ENCODE measurements at regions of chr18 and their contacts with region 1.

Region 1: GRCh38 chr18:54392543-54393023 is 34.9 kb downstream of the C18orf54 start:
- DNase-seq: no peak
- ATAC-seq: peak in 3 of 4 donors; percentile 45 to 51 (median 48)
- H3K4me3 ChIP-seq: no peak overlapping the region
- H3K27ac ChIP-seq: no peak overlapping the region
- H3K4me1 ChIP-seq: peaks cover 0 to 10% (median 0%) of the 10 kb centered on the region in 12 donors
- H3K27me3 ChIP-seq: no peaks in the 10 kb centered on the region
- CTCF ChIP-seq: peak; percentile 57 to 85 (median 71)
- POLR2A ChIP-seq: no peak

Region 2: GRCh38 chr18:54671291-54671881 is 278.8 kb after region 1 on chr18:
- intact Hi-C with region 1: loop called in 4 of 10 experiments (anchors 5 to 10 kb)
- DNase-seq: no peak
- ATAC-seq: no peak
- H3K4me3 ChIP-seq: no peak overlapping the region
- H3K27ac ChIP-seq: no peak overlapping the region
- H3K4me1 ChIP-seq: no peaks in the 10 kb centered on the region
- H3K27me3 ChIP-seq: peaks cover 0 to 4% (median 0%) of the 10 kb centered on the region in 9 donors
- CTCF ChIP-seq: peak; percentile 35 to 74 (median 61)
- POLR2A ChIP-seq: no peak

Region 3: DNA sequence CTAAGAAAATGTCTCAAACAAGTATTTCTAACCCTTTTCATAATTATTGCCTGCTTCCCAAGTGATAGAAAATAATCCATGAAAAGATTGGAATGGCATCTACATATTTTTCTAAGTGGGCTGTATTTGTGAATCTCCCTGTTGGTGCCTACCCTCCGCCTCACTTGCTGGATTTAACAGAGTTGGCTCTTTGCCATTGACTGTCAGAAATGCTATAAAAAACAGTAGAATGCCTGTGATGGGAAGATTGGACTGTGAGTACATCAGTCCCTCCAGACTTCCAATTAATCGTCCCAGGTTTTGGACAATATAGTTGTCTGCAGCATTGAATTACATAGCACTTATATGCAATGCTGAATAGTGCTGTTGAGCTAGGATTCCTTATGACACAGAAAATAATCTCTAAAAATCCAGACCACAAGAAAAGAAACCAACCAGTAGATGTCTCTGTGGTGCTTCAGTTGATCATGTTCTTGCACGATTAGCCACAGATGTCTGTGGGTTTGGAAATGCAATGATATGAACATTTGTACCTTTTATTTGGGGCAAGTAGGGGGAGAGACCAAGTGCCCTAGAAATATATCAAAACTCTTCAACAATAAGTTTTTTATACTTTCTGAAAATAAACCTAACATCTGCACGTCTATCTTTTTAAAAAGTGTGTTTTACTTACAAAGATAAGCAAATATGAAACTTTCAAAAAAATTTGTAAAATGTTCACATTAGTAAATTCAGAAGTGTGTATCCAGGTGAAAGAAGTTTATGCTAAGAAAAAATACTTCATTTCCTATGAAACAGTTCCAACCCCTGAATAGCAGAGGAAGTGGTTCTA is 287.0 kb after region 1 on chr18:
- intact Hi-C with region 1: loop called in 4 of 10 experiments (anchors 5 to 10 kb)
- DNase-seq: no peak
- ATAC-seq: peak in 3 of 4 donors; percentile 44 to 60 (median 53)
- H3K4me3 ChIP-seq: no peak overlapping the region
- H3K27ac ChIP-seq: no peak overlapping the region
- H3K4me1 ChIP-seq: no peaks in the 10 kb centered on the region
- H3K27me3 ChIP-seq: no peaks in the 10 kb centered on the region
- CTCF ChIP-seq: peak; percentile 11 to 56 (median 38)
- POLR2A ChIP-seq: no peak

Region 4: GRCh38 chr18:54983041-54983686 is 590.6 kb after region 1 on chr18:
- intact Hi-C with region 1: loop called in 1 of 10 experiments (anchors 2 kb)
- DNase-seq: no peak
- ATAC-seq: peak in 3 of 4 donors; percentile 42 to 67 (median 49)
- H3K4me3 ChIP-seq: no peak overlapping the region
- H3K27ac ChIP-seq: no peak overlapping the region
- H3K4me1 ChIP-seq: no peaks in the 10 kb centered on the region
- H3K27me3 ChIP-seq: no peaks in the 10 kb centered on the region
- CTCF ChIP-seq: peak; percentile 60 to 80 (median 72)
- POLR2A ChIP-seq: no peak